Right cardiac atrium (tissue), 5 donors: ENCODE measurements at regions of chr12 and their contacts with region 1.

Region 1: GRCh38 chr12:103548622-103549601 is 38.2 kb upstream of the STAB2 start:
- DNase-seq: peak; percentile 20 to 74 (median 40)
- ATAC-seq: peak; percentile 38 to 55
- H3K4me3 ChIP-seq: no peak overlapping the region
- H3K27ac ChIP-seq: no peak overlapping the region
- H3K4me1 ChIP-seq: no peaks in the 10 kb centered on the region
- H3K27me3 ChIP-seq: no peaks in the 10 kb centered on the region

Region 2: GRCh38 chr12:102883204-102883799 is 665.6 kb before region 1 on chr12:
- intact Hi-C with region 1: loop called in 3 of 4 experiments (anchors 5 kb)
- DNase-seq: peak; percentile 44 to 85 (median 62)
- ATAC-seq: peak; percentile 59 to 75
- H3K4me3 ChIP-seq: no peak overlapping the region
- H3K27ac ChIP-seq: no peak overlapping the region
- H3K4me1 ChIP-seq: no peaks in the 10 kb centered on the region
- H3K27me3 ChIP-seq: no peaks in the 10 kb centered on the region

Region 3: DNA sequence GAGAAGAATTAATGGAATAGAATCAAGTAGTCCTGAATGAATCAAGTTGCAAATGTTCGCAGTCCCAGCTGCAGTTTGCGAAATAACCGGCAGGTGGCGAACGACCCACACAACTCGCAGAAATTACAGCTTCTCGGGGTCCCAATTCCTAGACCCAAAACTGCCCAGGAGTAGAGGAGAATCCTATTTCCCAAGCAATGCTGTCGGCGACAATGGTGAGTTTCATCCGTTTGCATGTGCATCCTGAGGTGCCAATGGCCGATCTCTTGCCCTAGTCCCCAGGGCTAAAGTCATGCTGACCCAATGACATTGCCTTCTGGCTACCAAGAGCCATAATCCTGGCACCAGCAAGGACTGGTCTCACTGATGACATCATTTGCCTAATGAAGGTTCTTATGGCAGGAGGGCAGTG is 600.0 kb before region 1 on chr12:
- intact Hi-C with region 1: loop called (anchors 2 to 10 kb)
- DNase-seq: peak in 2 of 3 donors; percentile 65 to 67
- ATAC-seq: no peak
- H3K4me3 ChIP-seq: no peak overlapping the region
- H3K27ac ChIP-seq: no peak overlapping the region
- H3K4me1 ChIP-seq: no peaks in the 10 kb centered on the region
- H3K27me3 ChIP-seq: peaks cover 3% of the 10 kb centered on the region

Region 4: DNA sequence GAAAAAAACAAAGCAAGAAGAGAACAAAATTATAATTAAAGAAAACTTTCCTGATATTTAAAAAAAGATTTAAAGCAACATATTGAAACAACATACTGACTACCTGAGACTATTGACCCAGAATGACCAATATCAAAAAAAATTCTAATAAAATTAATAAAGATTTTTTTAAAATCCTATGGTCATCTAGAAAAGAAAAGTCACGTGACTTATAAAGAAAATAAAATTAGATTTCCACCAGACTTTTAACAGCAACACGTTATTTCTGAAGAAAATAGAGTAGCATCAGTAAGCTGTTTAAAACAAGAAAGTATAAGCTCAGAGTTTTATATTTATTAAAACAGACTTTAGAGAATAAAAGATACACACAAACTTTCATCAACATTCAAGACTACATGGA is 291.1 kb before region 1 on chr12:
- intact Hi-C with region 1: no loop called
- DNase-seq: no peak
- ATAC-seq: no peak
- H3K4me3 ChIP-seq: no peak overlapping the region
- H3K27ac ChIP-seq: no peak overlapping the region
- H3K4me1 ChIP-seq: no peaks in the 10 kb centered on the region
- H3K27me3 ChIP-seq: no peaks in the 10 kb centered on the region

Region 5: GRCh38 chr12:103705927-103706326 is 157.0 kb after region 1 on chr12:
- intact Hi-C with region 1: no loop called
- DNase-seq: no peak
- ATAC-seq: no peak
- H3K4me3 ChIP-seq: no peak overlapping the region
- H3K27ac ChIP-seq: no peak overlapping the region
- H3K4me1 ChIP-seq: no peaks in the 10 kb centered on the region
- H3K27me3 ChIP-seq: no peaks in the 10 kb centered on the region